Psoas muscle (tissue), 8 donors: ENCODE measurements at regions of chr9 and their contacts with region 1.

Region 1: GRCh38 chr9:116365056-116365471 is 211.5 kb downstream of the PAPPA start:
- DNase-seq: peak; percentile 50 to 78
- ATAC-seq: peak; percentile 86 to 96 (median 90)
- H3K4me3 ChIP-seq: peak overlapping the region; percentile 18
- H3K27ac ChIP-seq: peak overlapping the region; percentile 38
- H3K4me1 ChIP-seq: peaks cover 33% of the 10 kb centered on the region
- H3K27me3 ChIP-seq: no peaks in the 10 kb centered on the region
- CTCF ChIP-seq: peak; percentile 33

Region 2: GRCh38 chr9:116156621-116157314 is 208.3 kb before region 1 on chr9:
- intact Hi-C with region 1: loop called in 1 of 2 experiments (anchors 5 kb)
- DNase-seq: peak; percentile 64 to 86
- ATAC-seq: peak; percentile 92 to 98 (median 94)
- H3K4me3 ChIP-seq: peak overlapping the region; percentile 53
- H3K27ac ChIP-seq: peak overlapping the region; percentile 73
- H3K4me1 ChIP-seq: peaks cover 17% of the 10 kb centered on the region
- H3K27me3 ChIP-seq: peaks cover 0 to 35% (median 3%) of the 10 kb centered on the region in 3 donors
- CTCF ChIP-seq: peak; percentile 7

Region 3: DNA sequence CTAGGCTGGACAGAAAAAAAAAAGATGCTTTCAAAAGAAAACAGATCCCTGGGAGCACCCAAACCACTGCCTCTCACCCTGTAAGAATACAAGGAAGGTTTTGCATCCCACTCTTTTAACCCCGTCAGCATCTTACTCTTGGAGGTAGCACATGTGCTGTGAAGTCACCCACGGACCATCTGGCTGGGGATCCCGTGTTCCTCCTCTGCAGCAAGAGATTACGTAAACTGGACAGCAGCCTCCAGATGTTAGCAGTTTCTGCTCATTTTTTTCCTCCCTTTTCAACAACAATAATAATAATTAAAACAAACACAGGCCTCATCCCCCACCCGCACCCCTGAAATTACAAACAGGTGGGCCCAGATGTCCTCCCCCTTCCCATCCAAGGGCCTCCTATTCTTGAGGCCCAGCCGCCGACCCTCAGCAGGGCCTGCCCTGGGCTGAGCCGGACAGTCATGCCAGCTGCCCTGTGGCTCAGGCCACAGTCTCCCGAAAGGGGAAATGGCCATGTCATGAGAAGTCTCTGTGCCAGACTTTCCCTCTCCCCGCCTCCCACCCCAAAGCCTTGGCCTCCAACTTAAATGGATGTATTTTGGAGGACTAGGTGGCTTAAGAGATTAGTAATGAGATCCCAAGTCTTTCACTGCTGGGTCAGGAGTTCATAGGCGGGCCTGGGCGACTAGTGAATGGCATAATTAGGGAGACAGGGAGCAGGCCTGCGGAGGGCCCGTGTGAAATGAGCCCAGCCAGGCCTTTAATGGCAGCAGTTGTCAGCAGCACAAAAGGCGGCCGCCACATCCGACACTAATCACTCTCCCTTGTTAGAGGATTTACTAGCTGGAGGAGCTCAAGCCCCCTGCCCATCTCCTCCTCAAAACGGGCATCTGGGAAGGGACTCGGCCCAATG is 46.3 kb before region 1 on chr9:
- intact Hi-C with region 1: loop called in 1 of 2 experiments (anchors 5 kb)
- DNase-seq: peak; percentile 54 to 75
- ATAC-seq: peak; percentile 66 to 82 (median 72)
- H3K4me3 ChIP-seq: no peak overlapping the region
- H3K27ac ChIP-seq: peak overlapping the region; percentile 27
- H3K4me1 ChIP-seq: no peaks in the 10 kb centered on the region
- H3K27me3 ChIP-seq: no peaks in the 10 kb centered on the region
- CTCF ChIP-seq: no peak

Region 4: DNA sequence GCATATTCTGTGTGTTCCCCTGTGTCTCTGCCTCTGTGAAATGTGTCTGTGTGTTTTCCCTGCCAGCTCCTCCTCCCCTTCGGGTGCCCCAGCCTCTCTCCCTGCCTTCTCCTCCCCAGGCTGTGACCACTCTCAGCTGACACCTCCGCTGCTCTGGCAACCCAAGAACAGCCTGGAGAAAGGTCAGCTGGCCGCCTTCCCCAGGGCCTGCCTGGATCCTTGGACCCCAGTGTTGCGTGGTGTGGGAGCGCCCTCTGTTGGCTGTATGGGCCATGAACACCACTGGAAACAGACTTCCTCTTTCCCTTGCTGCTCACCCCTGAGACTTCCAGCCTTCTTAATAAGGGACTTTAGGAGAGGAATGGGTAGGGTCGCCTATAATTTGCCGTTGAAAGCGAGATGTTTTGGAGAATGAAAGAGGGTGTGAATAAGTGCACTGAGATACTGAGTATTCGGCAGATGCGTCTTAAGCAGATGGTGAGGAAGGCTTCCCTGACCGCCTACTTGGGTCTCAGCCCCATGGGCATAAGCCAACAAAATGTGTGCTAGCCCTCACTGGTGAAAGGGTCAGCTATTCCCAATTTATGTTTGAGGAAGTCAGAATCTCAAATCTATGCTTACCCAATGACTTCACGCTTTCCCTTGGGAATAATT is 207.2 kb after region 1 on chr9:
- intact Hi-C with region 1: loop called in 1 of 2 experiments (anchors 10 kb)
- DNase-seq: peak; percentile 90 to 95
- ATAC-seq: peak; percentile 97 to 100 (median 98)
- H3K4me3 ChIP-seq: no peak overlapping the region
- H3K27ac ChIP-seq: no peak overlapping the region
- H3K4me1 ChIP-seq: no peaks in the 10 kb centered on the region
- H3K27me3 ChIP-seq: no peaks in the 10 kb centered on the region
- CTCF ChIP-seq: peak; percentile 86